ENCODE measurements at regions of chr5 and their contacts with region 1.

Region 1: DNA sequence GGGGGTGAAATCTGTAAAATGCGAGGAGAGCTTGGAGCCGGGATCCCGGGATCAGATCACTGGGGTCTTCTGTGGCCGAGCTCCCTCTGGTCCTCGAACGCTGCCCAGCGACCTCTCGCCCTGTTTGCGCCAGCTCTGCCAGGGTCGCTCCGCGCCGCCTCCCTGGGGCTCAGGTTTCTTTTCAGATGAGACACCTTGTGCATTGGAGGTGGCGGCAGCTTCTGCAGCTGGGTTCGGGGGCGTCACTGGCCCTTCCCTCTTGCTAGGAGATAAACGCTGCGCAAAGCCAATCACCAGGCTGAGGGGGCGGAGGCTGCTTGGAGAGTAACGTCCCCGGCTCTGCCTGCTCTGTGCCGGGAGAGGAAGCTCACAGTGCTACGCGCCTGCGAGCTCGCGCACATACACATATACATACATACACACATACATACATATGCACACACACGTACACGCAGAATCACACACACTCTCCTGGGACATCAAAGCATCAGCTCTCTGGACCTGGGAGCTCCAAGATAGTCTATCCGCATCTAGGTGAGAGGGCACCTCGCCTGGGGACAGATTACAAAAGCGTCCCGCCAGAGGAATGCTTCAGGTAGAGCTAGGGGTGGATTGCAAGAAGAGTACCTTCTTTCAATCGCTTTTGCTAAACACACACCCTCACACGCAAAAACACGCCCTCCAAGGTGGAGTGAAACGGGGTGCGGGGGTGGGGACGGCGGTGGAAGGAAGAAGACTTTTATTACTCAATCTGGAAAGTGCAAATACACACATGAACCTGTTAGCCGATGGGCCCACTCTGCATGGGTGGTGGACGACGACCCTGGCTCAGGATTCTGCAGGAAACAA is at the start of gene ST8SIA4:
- DNase-seq: peak; percentile 95
- H3K4me3 Mint-ChIP-seq: peak within 1 kb of the TSS; percentile 97
- H3K27ac Mint-ChIP-seq: peak within 1 kb of the TSS; percentile 99
- H3K4me1 Mint-ChIP-seq: peaks cover 34% of the 10 kb centered on the region
- H3K27me3 Mint-ChIP-seq: no peaks in the 10 kb centered on the region
- total RNA-seq, gene ST8SIA4: 69.4 to 72.1 TPM

Region 2: DNA sequence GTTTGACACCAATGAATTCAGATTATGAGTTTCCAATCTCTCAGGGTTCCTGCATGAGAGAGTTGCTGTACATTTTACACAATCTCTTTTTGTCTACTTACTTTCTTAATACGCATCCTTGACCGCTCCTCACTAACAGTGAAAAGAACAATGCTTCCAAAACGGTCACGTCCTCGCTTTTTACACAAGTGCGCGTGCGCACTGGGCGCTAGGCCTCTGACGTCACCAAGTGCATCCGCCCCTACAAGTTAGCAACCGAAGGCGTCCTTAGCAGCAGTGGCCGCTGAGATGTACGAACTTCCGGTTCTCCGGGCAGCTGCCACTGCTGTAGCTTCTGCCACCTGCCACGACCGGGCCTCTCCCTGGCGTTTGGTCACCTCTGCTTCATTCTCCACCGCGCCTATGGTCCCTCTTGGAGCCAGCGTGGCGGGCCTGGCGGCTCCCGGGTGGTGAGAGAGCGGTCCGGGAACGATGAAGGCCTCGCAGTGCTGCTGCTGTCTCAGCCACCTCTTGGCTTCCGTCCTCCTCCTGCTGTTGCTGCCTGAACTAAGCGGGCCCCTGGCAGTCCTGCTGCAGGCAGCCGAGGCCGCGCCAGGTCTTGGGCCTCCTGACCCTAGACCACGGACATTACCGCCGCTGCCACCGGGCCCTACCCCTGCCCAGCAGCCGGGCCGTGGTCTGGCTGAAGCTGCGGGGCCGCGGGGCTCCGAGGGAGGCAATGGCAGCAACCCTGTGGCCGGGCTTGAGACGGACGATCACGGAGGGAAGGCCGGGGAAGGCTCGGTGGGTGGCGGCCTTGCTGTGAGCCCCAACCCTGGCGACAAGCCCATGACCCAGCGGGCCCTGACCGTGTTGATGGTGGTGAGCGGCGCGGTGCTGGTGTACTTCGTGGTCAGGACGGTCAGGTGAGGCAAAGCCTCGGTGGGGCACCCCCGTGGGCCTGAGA is 367.9 kb before region 1 on chr5 and contains the start of gene FAM174A:
- CTCF ChIA-PET with region 1: no interaction called
- POLR2A ChIA-PET with region 1: interaction called, 21 read pairs
- DNase-seq: peak; percentile 95
- H3K4me3 Mint-ChIP-seq: peak within 1 kb of the TSS; percentile 96
- H3K27ac Mint-ChIP-seq: peak within 1 kb of the TSS; percentile 77
- H3K4me1 Mint-ChIP-seq: peaks cover 22% of the 10 kb centered on the region
- H3K27me3 Mint-ChIP-seq: peaks cover 7% of the 10 kb centered on the region
- total RNA-seq, gene FAM174A: 6.0 to 6.8 TPM

Region 3: DNA sequence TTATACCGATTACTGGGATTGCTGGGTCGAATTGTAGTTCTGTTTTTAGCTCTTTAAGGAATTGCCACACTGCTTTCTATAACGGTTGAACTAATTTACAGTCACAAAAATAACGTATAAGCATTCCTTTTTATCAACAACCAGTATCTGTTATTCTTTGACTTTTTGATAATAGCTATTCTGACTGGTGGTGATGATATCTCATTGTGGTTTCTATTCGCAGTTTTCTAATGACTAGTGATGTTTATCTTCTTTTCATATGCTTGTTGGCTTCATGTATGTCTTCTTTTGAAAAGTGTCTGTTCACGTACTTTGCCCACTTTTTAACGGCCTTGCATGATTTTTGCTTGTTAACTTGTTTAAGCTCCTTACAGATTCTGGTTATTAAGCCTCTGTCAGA is 293.7 kb before region 1 on chr5:
- CTCF ChIA-PET with region 1: no interaction called
- POLR2A ChIA-PET with region 1: no interaction called
- DNase-seq: no peak
- H3K4me3 Mint-ChIP-seq: no peak overlapping the region
- H3K27ac Mint-ChIP-seq: no peak overlapping the region
- H3K4me1 Mint-ChIP-seq: peaks cover 14% of the 10 kb centered on the region
- H3K27me3 Mint-ChIP-seq: peaks cover 10% of the 10 kb centered on the region

Region 4: GRCh38 chr5:100827481-100827889 is 75.8 kb before region 1 on chr5:
- CTCF ChIA-PET with region 1: no interaction called
- POLR2A ChIA-PET with region 1: interaction called, 13 read pairs
- DNase-seq: no peak
- H3K4me3 Mint-ChIP-seq: no peak overlapping the region
- H3K27ac Mint-ChIP-seq: peak overlapping the region; percentile 50
- H3K4me1 Mint-ChIP-seq: peaks cover 37% of the 10 kb centered on the region
- H3K27me3 Mint-ChIP-seq: no peaks in the 10 kb centered on the region

Region 5: GRCh38 chr5:100852988-100853449 is 50.2 kb before region 1 on chr5:
- CTCF ChIA-PET with region 1: interaction called, 8 read pairs
- POLR2A ChIA-PET with region 1: interaction called, 148 read pairs
- DNase-seq: no peak
- H3K4me3 Mint-ChIP-seq: peak overlapping the region; percentile 62
- H3K27ac Mint-ChIP-seq: peak overlapping the region; percentile 94
- H3K4me1 Mint-ChIP-seq: peaks cover 50% of the 10 kb centered on the region
- H3K27me3 Mint-ChIP-seq: no peaks in the 10 kb centered on the region

Region 6: GRCh38 chr5:100872408-100873190 is 30.7 kb before region 1 on chr5:
- CTCF ChIA-PET with region 1: no interaction called
- POLR2A ChIA-PET with region 1: interaction called, 12 read pairs
- DNase-seq: no peak
- H3K4me3 Mint-ChIP-seq: no peak overlapping the region
- H3K27ac Mint-ChIP-seq: peak overlapping the region; percentile 2
- H3K4me1 Mint-ChIP-seq: peaks cover 49% of the 10 kb centered on the region
- H3K27me3 Mint-ChIP-seq: no peaks in the 10 kb centered on the region

Region 7: GRCh38 chr5:101074664-101075063 is 171.4 kb after region 1 on chr5:
- CTCF ChIA-PET with region 1: no interaction called
- POLR2A ChIA-PET with region 1: no interaction called
- DNase-seq: no peak
- H3K4me3 Mint-ChIP-seq: no peak overlapping the region
- H3K27ac Mint-ChIP-seq: no peak overlapping the region
- H3K4me1 Mint-ChIP-seq: no peaks in the 10 kb centered on the region
- H3K27me3 Mint-ChIP-seq: no peaks in the 10 kb centered on the region

Region 8: GRCh38 chr5:101271416-101271815 is 368.2 kb after region 1 on chr5:
- CTCF ChIA-PET with region 1: no interaction called
- POLR2A ChIA-PET with region 1: no interaction called
- DNase-seq: no peak
- H3K4me3 Mint-ChIP-seq: no peak overlapping the region
- H3K27ac Mint-ChIP-seq: no peak overlapping the region
- H3K4me1 Mint-ChIP-seq: no peaks in the 10 kb centered on the region
- H3K27me3 Mint-ChIP-seq: peaks cover 3% of the 10 kb centered on the region